Left lung (tissue), 14 donors: ENCODE measurements at regions of chr18 and their contacts with region 1.

Region 1: DNA sequence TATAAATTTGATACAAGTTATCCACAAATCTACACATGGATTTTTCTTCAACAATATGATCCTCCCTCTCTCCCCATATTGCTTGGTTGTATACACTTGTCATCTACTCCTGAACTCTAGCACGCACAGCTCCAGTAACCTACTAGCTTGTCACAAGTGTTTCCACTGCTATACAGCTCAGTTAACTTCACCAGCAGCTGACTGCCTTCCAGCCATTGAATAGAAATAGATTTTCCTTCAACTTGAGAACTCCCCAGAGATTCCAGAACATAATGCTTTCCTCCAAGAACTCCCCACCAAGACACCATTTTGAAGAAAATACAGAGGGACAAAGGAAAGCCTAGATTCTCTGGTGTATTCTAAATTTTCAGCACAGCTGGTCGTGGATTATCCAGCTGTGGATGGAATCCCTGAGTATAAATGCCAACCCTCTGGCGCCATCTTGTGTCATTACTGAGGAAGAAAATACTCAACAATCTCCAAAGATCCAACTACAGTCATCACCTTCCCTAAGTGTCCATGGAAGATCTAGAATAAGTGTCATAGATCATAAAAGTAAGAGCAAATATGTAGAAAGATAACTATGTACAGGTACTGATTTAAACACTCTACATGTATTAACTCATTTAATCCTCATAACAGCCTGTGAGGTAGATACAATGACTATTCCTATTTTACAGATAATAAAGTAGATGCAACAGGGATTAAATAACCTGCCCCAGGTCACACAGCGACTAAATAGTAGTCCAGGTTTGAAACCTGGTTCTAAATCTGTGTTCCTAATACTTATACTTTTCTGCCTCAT is 156.7 kb downstream of the ARHGAP28 start:
- DNase-seq: peak in 2 of 4 donors; percentile 69 to 84
- ATAC-seq: peak; percentile 88
- H3K4me3 ChIP-seq: no peak overlapping the region
- H3K27ac ChIP-seq: peak overlapping the region in 1 of 2 donors; percentile 60
- H3K4me1 ChIP-seq: no peaks in the 10 kb centered on the region
- H3K27me3 ChIP-seq: no peaks in the 10 kb centered on the region
- CTCF ChIP-seq: peak; percentile 46 to 67

Region 2: GRCh38 chr18:6543330-6543908 is 342.8 kb before region 1 on chr18:
- intact Hi-C with region 1: loop called in 1 of 2 experiments (anchors 5 kb)
- DNase-seq: peak in 1 of 4 donors; percentile 57
- ATAC-seq: peak; percentile 51
- H3K4me3 ChIP-seq: no peak overlapping the region
- H3K27ac ChIP-seq: no peak overlapping the region
- H3K4me1 ChIP-seq: no peaks in the 10 kb centered on the region
- H3K27me3 ChIP-seq: no peaks in the 10 kb centered on the region
- CTCF ChIP-seq: peak; percentile 27 to 48

Region 3: DNA sequence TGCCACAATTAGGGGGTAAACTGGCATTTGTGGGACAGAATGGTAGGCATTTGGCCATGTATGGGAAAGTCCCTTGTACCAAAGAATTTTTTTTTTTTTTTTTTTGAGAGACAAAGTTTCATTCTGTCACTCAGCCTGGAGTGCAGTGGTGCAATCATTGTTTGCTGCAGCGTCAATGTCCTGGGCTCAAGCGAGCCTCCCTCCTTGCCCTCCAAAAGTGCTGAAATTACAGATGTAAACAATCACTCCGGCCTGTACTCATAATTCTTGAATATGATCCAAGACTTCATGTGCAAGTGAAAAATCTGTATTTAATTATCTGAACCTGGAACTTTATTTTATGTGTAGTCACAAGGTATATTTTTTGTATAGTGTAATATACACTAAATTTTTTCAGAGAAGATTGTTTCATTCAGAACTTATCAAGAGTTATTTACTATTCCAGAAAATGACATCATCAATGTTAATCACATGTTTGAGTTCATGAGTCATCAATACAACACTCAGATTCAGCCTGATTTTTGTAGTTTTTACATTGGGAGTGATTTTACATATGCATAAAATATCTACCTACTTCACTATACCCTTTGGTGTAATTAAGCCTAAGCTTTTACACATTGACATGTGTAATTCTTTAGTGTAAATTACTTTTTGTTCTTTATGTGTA is 332.8 kb before region 1 on chr18:
- intact Hi-C with region 1: loop called in 1 of 2 experiments (anchors 5 kb)
- DNase-seq: no peak
- ATAC-seq: peak; percentile 47
- H3K4me3 ChIP-seq: no peak overlapping the region
- H3K27ac ChIP-seq: no peak overlapping the region
- H3K4me1 ChIP-seq: no peaks in the 10 kb centered on the region
- H3K27me3 ChIP-seq: no peaks in the 10 kb centered on the region
- CTCF ChIP-seq: no peak